Left ventricle myocardium superior (tissue), 1 donor: ENCODE measurements at regions of chr1 and their contacts with region 1.

Region 1: GRCh38 chr1:27275696-27276095 is 41.3 kb downstream of the WDTC1 start:
- DNase-seq: no peak
- ATAC-seq: no peak

Region 2: DNA sequence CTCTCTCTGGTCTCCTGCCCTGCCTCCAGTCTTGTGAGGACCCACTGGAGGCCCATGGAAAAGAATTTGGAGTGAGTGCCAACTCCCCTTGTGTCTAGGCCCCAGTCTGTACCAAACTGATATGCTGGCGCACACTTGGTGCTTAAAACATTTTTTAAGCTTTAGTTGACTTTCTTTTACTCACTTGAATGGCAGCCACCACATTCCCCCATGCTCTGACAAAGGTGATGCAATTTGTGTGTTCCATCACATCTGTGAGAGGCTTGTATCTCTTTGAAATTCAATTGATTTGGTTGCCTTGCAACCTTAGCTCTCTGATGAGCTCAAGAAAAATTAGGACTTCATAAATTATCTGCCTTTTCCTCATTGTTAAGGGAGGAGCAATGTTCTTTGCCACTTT is 71.8 kb before region 1 on chr1:
- intact Hi-C with region 1: loop called (anchors 10 kb)
- DNase-seq: no peak
- ATAC-seq: no peak